ENCODE measurements at regions of chr1 and their contacts with region 1.

Region 1: GRCh38 chr1:73800376-73800775 is 397.6 kb downstream of the LRRIQ3 start:
- DNase-seq: no peak
- ATAC-seq: no peak
- H3K4me3 ChIP-seq: no peak overlapping the region
- H3K4me3 Mint-ChIP-seq: no peak overlapping the region
- H3K27ac ChIP-seq: no peak overlapping the region
- H3K27ac Mint-ChIP-seq: no peak overlapping the region
- H3K4me1 ChIP-seq: no peaks in the 10 kb centered on the region
- H3K4me1 Mint-ChIP-seq: no peaks in the 10 kb centered on the region
- H3K27me3 ChIP-seq: no peaks in the 10 kb centered on the region
- H3K27me3 Mint-ChIP-seq: no peaks in the 10 kb centered on the region
- CTCF ChIP-seq: no peak

Region 2: GRCh38 chr1:73749996-73750395 is 50.4 kb before region 1 on chr1:
- CTCF ChIA-PET with region 1: no interaction called
- POLR2A ChIA-PET with region 1: no interaction called
- intact Hi-C with region 1: loop called in 1 of 2 experiments (anchors 5 kb)
- DNase-seq: no peak
- ATAC-seq: no peak
- H3K4me3 ChIP-seq: no peak overlapping the region
- H3K4me3 Mint-ChIP-seq: no peak overlapping the region
- H3K27ac ChIP-seq: no peak overlapping the region
- H3K27ac Mint-ChIP-seq: no peak overlapping the region
- H3K4me1 ChIP-seq: no peaks in the 10 kb centered on the region
- H3K4me1 Mint-ChIP-seq: no peaks in the 10 kb centered on the region
- H3K27me3 ChIP-seq: no peaks in the 10 kb centered on the region
- H3K27me3 Mint-ChIP-seq: no peaks in the 10 kb centered on the region
- CTCF ChIP-seq: no peak

Region 3: GRCh38 chr1:74065081-74065480 is 264.7 kb after region 1 on chr1:
- CTCF ChIA-PET with region 1: no interaction called
- POLR2A ChIA-PET with region 1: no interaction called
- intact Hi-C with region 1: no loop called
- DNase-seq: no peak
- ATAC-seq: no peak
- H3K4me3 ChIP-seq: no peak overlapping the region
- H3K4me3 Mint-ChIP-seq: no peak overlapping the region
- H3K27ac ChIP-seq: no peak overlapping the region
- H3K27ac Mint-ChIP-seq: no peak overlapping the region
- H3K4me1 ChIP-seq: no peaks in the 10 kb centered on the region
- H3K4me1 Mint-ChIP-seq: no peaks in the 10 kb centered on the region
- H3K27me3 ChIP-seq: no peaks in the 10 kb centered on the region
- H3K27me3 Mint-ChIP-seq: no peaks in the 10 kb centered on the region
- CTCF ChIP-seq: no peak